ENCODE measurements at regions of chr14 and their contacts with region 1.

Region 1: GRCh38 chr14:50778721-50779483 is 52.1 kb downstream of the NIN start:
- DNase-seq: no peak
- H3K4me3 Mint-ChIP-seq: no peak overlapping the region
- H3K27ac Mint-ChIP-seq: no peak overlapping the region
- H3K4me1 Mint-ChIP-seq: peaks cover 21% of the 10 kb centered on the region
- H3K27me3 Mint-ChIP-seq: no peaks in the 10 kb centered on the region

Region 2: GRCh38 chr14:50794068-50794645 is 15.3 kb after region 1 on chr14:
- CTCF ChIA-PET with region 1: interaction called, 37 read pairs
- POLR2A ChIA-PET with region 1: no interaction called
- DNase-seq: no peak
- H3K4me3 Mint-ChIP-seq: no peak overlapping the region
- H3K27ac Mint-ChIP-seq: no peak overlapping the region
- H3K4me1 Mint-ChIP-seq: peaks cover 30% of the 10 kb centered on the region
- H3K27me3 Mint-ChIP-seq: no peaks in the 10 kb centered on the region

Region 3: DNA sequence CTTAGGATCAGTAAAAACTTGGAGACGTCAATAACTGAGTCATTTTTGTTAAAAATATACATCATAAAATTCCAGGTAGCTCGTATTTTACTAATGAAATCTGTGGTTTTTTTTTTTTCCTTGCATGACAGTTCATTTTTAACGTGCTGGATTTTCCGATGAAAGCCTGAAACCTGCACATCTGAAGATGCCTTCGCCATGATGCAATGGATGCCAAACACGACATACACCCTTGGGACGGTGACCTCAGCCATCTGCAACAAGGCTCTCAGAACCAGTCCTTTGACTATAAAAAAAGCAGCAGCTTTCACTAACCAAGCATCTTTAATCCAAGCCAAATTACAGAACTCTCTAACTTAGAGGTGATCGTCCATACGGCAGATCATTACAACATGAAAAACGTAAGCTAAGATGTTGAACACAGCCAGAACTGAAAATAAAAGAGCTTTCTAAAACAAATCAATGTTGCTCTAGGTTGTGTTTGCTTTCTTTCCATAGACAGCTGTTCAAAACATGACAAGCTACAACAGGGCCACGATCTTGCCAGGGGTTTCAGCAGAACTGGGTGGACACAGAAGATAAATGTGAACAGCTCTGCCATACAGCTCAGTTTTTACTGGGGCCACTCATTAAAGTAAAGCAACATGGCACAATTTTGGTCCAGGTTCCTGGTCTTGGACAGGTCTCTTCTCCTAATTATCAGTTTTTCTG is 44.3 kb after region 1 on chr14:
- CTCF ChIA-PET with region 1: interaction called, 13 read pairs
- POLR2A ChIA-PET with region 1: no interaction called
- DNase-seq: no peak
- H3K4me3 Mint-ChIP-seq: peak overlapping the region; percentile 7
- H3K27ac Mint-ChIP-seq: peak overlapping the region; percentile 60
- H3K4me1 Mint-ChIP-seq: peaks cover 63% of the 10 kb centered on the region
- H3K27me3 Mint-ChIP-seq: no peaks in the 10 kb centered on the region

Region 4: GRCh38 chr14:50830932-50831725 is 52.2 kb after region 1 on chr14 and contains the start of gene NIN:
- CTCF ChIA-PET with region 1: interaction called, 10 read pairs
- POLR2A ChIA-PET with region 1: interaction called, 5 read pairs
- DNase-seq: peak; percentile 75
- H3K4me3 Mint-ChIP-seq: peak within 1 kb of the TSS; percentile 90
- H3K27ac Mint-ChIP-seq: peak within 1 kb of the TSS; percentile 79
- H3K4me1 Mint-ChIP-seq: peaks cover 34% of the 10 kb centered on the region
- H3K27me3 Mint-ChIP-seq: peaks cover 13% of the 10 kb centered on the region
- total RNA-seq, gene NIN: 50.3 to 56.5 TPM